Activated CD4-positive, alpha-beta T cell treated with anti-CD3 and anti-CD28 coated beads, Interleukin-2, amount 10 ng/mL, durations not matched to agents 7 days and 5 days (primary cell): ENCODE measurements at regions of chr12 and their contacts with region 1.

Region 1: GRCh38 chr12:6278439-6279255 is 31.8 kb upstream of the PLEKHG6 start:
- DNase-seq: peak; percentile 75
- H3K4me3 Mint-ChIP-seq: peak overlapping the region; percentile 68
- H3K27ac Mint-ChIP-seq: peak overlapping the region; percentile 70
- H3K4me1 Mint-ChIP-seq: peaks cover 8% of the 10 kb centered on the region
- H3K27me3 Mint-ChIP-seq: peaks cover 33% of the 10 kb centered on the region

Region 2: GRCh38 chr12:6182116-6182898 is 96.3 kb before region 1 on chr12:
- CTCF ChIA-PET with region 1: no interaction called
- POLR2A ChIA-PET with region 1: no interaction called
- DNase-seq: no peak
- H3K4me3 Mint-ChIP-seq: no peak overlapping the region
- H3K27ac Mint-ChIP-seq: no peak overlapping the region
- H3K4me1 Mint-ChIP-seq: no peaks in the 10 kb centered on the region
- H3K27me3 Mint-ChIP-seq: no peaks in the 10 kb centered on the region

Region 3: DNA sequence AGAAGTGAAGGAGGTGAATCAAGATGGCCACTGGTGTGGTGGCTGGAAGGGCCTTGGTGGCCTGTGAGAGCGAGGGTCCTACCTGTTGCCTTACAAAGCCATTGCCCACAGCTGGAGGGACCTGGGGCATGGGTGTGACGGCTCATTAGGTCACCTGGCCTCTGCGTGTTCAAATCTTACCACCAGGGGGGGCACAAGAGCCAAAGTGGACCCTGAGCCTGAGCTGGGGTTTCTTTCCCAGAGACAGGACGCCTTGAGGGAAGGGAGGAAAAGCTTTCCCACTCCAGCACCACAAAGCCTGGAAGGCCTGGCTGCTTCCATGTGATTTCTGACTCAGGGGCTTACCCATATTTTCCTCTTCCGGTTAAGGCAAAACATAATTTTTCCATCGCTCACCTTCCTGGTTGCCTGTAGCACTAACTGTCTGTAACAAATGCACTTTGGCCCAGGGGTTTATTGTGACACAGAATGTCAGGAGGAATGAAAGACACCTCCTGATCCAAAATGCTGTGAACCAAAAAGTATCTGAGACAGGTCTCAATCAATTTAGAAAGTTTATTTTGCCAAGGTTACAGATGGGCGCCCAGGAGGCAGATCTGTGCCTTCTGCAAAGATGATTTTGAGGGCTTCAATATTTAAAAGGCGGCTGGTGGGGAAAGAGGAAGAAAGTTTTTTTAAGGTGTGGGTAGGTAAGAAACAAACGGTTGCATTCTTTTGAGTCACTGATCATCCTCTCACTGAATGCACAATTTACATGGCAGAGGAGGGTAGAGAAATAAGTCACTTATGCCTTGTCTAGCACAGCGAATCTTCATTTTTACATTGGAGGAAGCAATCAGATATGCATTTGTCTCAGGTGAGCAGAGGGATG is 82.7 kb before region 1 on chr12:
- CTCF ChIA-PET with region 1: interaction called, 27 read pairs
- POLR2A ChIA-PET with region 1: interaction called, 3 read pairs
- DNase-seq: peak; percentile 78
- H3K4me3 Mint-ChIP-seq: no peak overlapping the region
- H3K27ac Mint-ChIP-seq: no peak overlapping the region
- H3K4me1 Mint-ChIP-seq: peaks cover 13% of the 10 kb centered on the region
- H3K27me3 Mint-ChIP-seq: peaks cover 32% of the 10 kb centered on the region

Region 4: DNA sequence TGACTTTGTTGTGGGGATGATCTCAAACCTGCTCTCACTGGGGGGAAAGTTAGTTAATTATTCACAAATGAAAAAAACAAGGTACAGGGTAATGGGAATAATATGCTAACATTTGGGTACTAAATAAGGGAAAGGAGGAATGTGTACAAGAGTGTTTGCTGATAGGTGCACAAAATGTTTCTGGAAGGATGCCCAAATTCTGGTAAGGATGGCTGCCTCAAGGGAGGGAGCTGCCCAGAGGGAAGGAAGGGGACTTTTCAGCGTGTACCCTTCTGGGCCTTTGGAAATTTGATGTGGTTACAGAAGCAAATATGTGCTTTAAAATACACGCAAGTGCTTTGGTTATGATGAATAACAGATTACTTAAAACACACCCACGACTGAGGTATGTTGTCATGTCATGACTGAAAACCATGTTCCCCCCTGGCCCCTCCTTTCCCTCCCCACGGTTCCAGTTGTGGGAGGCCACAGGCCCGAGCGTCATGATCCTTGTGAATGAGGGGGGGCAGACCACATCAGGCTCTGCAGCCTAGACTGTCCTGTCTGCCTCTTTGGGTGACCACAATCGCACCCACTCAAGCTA is 11.4 kb before region 1 on chr12:
- CTCF ChIA-PET with region 1: interaction called, 10 read pairs
- POLR2A ChIA-PET with region 1: no interaction called
- DNase-seq: no peak
- H3K4me3 Mint-ChIP-seq: no peak overlapping the region
- H3K27ac Mint-ChIP-seq: no peak overlapping the region
- H3K4me1 Mint-ChIP-seq: peaks cover 1% of the 10 kb centered on the region
- H3K27me3 Mint-ChIP-seq: peaks cover 3% of the 10 kb centered on the region

Region 5: DNA sequence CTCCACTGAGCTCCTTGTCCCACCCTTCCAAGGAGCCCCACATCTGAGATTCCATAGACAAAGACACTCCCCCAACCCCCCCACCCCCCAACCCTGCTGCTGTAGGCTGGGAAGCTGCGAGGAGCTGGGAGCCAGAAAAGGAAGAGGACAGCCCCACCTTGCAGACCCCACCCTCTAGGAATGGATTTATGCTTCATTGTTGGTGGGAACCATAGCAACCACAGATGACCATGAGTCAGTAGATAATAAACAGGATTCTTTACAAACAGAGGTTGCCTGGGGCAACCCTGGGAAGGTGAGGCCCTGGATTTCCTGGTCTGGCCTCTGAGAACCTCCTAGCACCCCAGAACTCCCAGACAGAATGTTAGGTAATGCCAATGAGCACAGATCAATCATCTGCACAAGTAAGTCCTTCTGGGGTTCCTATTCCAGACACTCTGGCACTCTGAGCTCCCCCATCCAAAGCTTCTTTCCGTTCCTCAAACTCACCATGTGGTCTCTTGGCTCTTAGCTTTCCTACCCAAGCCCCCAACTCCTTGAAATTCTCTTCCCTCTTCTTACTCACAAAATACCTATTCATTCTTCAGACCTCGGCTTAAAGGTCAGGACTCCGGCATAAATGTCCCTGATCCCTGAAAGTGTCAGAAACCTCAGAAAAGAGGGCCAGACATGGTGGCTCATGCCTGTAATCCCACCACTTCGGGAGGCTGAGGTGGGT is 16.6 kb after region 1 on chr12:
- CTCF ChIA-PET with region 1: interaction called, 14 read pairs
- POLR2A ChIA-PET with region 1: no interaction called
- DNase-seq: no peak
- H3K4me3 Mint-ChIP-seq: no peak overlapping the region
- H3K27ac Mint-ChIP-seq: no peak overlapping the region
- H3K4me1 Mint-ChIP-seq: no peaks in the 10 kb centered on the region
- H3K27me3 Mint-ChIP-seq: peaks cover 9% of the 10 kb centered on the region